ENCODE measurements at regions of chr17 and their contacts with region 1.

Region 1: DNA sequence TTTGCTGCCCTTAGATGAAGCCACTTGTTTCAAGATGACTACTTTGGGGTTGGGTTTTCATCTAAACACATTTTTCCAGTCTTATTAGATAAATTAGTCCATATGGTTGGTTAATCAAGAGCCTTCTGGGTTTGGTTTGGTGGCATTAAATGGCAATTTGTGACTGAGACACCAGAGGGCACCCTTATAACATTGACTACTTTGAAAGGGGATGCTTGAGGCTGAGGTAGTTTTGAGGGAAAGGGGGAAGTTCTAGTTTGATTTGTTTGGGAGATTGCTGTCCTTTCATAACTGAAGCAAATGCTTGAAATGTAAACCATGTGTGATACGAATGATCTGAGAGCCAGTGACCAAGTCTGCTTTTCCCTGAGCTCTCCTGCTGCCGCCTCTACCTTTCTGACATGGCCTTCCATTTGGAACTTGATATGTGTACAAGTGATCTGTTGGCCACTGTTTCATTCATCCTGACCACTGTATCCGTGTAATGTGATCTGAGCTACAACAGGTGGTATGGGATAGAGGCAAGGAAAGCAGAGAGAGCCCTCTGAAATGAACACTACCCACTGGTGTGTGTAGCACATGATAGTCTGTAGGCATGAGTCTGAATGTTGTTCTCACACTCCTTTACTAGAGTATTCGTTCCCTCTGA is 5.8 kb upstream of the RARA start:
- DNase-seq: no peak
- ATAC-seq: peak; percentile 83
- H3K4me3 ChIP-seq: no peak overlapping the region
- H3K27ac ChIP-seq: no peak overlapping the region
- H3K4me1 ChIP-seq: peaks cover 5% of the 10 kb centered on the region; the same call in 1 of the 2 replicates
- H3K27me3 ChIP-seq: no peaks in the 10 kb centered on the region
- CTCF ChIP-seq: peak; percentile 62 to 80 (median 68); a peak in 5 of 6 replicates
- EP300 ChIP-seq: no peak
- POLR2A ChIP-seq: no peak; the same call in 1 of the 2 replicates
- RAD21 ChIP-seq: peak; percentile 96

Region 2: DNA sequence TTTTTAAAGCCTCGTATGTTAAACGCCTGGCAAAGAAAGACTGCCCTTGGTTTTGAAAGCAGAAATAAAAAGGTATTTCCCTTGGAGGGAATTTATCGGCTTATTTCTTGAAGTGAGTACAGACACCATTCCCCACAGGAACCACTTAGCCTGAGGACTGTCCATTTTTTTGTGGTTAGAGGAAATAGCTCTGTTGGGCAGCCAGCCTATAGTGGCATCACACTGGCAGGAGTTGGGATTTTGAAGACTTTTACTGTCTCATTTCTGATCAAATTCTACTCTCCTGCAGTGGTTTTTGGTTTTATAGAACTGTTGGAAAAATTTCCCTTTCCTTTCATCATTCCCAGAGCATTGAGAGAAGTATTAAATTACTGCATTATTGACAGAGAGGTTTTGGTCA is 49.6 kb before region 1 on chr17:
- CTCF ChIA-PET with region 1: no interaction called
- POLR2A ChIA-PET with region 1: no interaction called
- RAD21 ChIA-PET with region 1: no interaction called
- SMC1A ChIA-PET with region 1: no interaction called
- in situ Hi-C with region 1: no loop called
- intact Hi-C with region 1: no loop called
- DNase-seq: no peak
- ATAC-seq: no peak
- H3K4me3 ChIP-seq: no peak overlapping the region
- H3K27ac ChIP-seq: no peak overlapping the region
- H3K4me1 ChIP-seq: no peaks in the 10 kb centered on the region
- H3K27me3 ChIP-seq: no peaks in the 10 kb centered on the region
- CTCF ChIP-seq: no peak
- EP300 ChIP-seq: no peak
- POLR2A ChIP-seq: no peak
- RAD21 ChIP-seq: no peak

Region 3: GRCh38 chr17:40317880-40318829 is 15.0 kb after region 1 on chr17:
- CTCF ChIA-PET with region 1: interaction called, 90 read pairs
- POLR2A ChIA-PET with region 1: interaction called, 123 read pairs
- RAD21 ChIA-PET with region 1: interaction called, 156 read pairs
- SMC1A ChIA-PET with region 1: interaction called, 172 read pairs
- in situ Hi-C with region 1: no loop called
- intact Hi-C with region 1: no loop called
- DNase-seq: peak; percentile 79
- ATAC-seq: peak; percentile 83
- H3K4me3 ChIP-seq: peak overlapping the region; percentile 91
- H3K27ac ChIP-seq: peak overlapping the region; percentile 96
- H3K4me1 ChIP-seq: peaks cover 44% of the 10 kb centered on the region
- H3K27me3 ChIP-seq: no peaks in the 10 kb centered on the region
- CTCF ChIP-seq: no peak
- EP300 ChIP-seq: no peak; a peak in 1 of 4 replicates
- POLR2A ChIP-seq: peak; percentile 79
- RAD21 ChIP-seq: no peak

Region 4: GRCh38 chr17:40340880-40341807 is 38.0 kb after region 1 on chr17:
- CTCF ChIA-PET with region 1: interaction called, 15 read pairs
- POLR2A ChIA-PET with region 1: interaction called, 4 read pairs
- RAD21 ChIA-PET with region 1: interaction called, 12 read pairs
- SMC1A ChIA-PET with region 1: interaction called, 6 read pairs
- in situ Hi-C with region 1: no loop called
- intact Hi-C with region 1: no loop called
- DNase-seq: no peak
- ATAC-seq: peak; percentile 95
- H3K4me3 ChIP-seq: peak overlapping the region; percentile 70
- H3K27ac ChIP-seq: no peak overlapping the region
- H3K4me1 ChIP-seq: peaks cover 54% of the 10 kb centered on the region
- H3K27me3 ChIP-seq: no peaks in the 10 kb centered on the region
- CTCF ChIP-seq: peak in 2 of 3 experiments; percentile 17 to 35; a peak in 4 of 6 replicates
- EP300 ChIP-seq: no peak
- POLR2A ChIP-seq: no peak
- RAD21 ChIP-seq: no peak

Region 5: DNA sequence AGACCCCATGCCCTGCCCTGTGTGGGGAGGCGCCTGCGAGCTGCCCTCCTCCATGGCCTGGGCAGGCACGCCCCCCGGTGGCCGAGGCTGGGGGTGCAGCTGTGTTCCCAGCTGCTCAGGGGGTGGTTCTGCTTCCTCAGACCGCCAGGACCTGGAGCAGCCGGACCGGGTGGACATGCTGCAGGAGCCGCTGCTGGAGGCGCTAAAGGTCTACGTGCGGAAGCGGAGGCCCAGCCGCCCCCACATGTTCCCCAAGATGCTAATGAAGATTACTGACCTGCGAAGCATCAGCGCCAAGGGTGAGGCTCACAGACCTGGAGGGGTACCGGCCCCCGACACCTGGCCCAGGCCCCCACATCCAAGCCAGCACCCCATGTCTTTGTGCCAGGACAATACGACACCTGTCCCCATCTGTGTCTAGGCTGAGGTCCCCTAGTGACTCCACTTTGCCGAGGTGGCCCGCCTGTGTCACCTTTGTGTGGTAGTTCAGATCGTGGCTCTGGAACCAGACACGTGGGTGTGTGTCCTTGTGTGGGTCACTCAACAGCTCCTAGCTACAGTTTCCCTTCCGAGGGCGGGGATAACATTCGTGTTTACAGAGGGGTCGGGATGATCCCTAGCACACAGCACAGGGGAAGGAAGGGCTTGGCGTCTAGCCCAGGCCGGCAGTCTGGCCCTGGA is 52.1 kb after region 1 on chr17:
- CTCF ChIA-PET with region 1: interaction called, 311 read pairs
- POLR2A ChIA-PET with region 1: interaction called, 9 read pairs
- RAD21 ChIA-PET with region 1: interaction called, 271 read pairs
- SMC1A ChIA-PET with region 1: interaction called, 142 read pairs
- in situ Hi-C with region 1: loop called (anchors 5 kb)
- intact Hi-C with region 1: loop called (anchors 1 kb)
- DNase-seq: no peak
- ATAC-seq: peak; percentile 89
- H3K4me3 ChIP-seq: no peak overlapping the region
- H3K27ac ChIP-seq: no peak overlapping the region
- H3K4me1 ChIP-seq: peaks cover 15% of the 10 kb centered on the region
- H3K27me3 ChIP-seq: peaks cover 0 to 2% of the 10 kb centered on the region in 2 experiments; a peak in 1 of 4 replicates
- CTCF ChIP-seq: peak; percentile 84 to 96 (median 96)
- EP300 ChIP-seq: no peak
- POLR2A ChIP-seq: peak; percentile 42
- RAD21 ChIP-seq: peak; percentile 96

Region 6: DNA sequence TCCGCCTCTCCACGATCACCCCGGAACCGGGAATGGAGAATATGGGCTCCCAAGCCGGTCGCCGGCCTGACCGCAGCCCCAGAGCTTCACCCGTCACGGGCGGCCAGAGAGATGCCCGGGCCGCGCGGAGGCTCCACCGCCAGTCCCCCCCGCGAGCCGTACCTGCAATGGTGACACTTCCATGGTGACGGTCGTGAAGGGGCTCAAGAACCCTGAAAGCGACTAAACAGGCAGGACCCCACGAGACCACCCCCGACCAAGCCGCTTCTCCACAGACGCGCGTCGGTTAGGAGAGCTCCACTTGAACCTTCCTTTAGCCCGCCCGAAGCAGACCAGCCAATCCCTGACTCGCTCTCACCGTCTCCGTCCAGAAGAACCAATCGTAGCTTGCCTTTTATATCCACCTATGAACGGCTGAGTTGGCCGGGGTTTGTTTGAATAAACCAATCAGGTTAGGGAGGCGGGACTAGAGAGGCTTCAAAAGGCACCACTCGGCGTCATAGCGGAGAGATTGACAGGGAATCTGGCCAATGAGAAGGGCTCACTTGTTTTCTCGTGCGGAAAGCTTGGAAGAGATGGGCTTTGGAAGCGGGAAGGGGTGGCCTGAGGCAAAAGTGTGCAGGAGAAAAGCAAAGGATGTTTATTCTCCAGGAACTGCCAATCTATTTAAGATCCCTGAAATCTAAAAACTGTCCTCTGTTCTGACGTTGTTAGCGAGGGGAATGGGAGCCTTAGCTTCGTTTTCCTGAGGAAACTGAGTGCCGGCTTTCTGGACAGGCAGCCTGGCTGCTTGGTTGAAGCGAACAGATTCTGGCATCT is 114.7 kb after region 1 on chr17 and contains the start of gene TOP2A:
- CTCF ChIA-PET with region 1: interaction called, 22 read pairs
- POLR2A ChIA-PET with region 1: no interaction called
- RAD21 ChIA-PET with region 1: interaction called, 16 read pairs
- SMC1A ChIA-PET with region 1: interaction called, 22 read pairs
- in situ Hi-C with region 1: no loop called
- intact Hi-C with region 1: no loop called
- DNase-seq: peak; percentile 99
- ATAC-seq: peak; percentile 97
- H3K4me3 ChIP-seq: peak within 1 kb of the TSS; percentile 94
- H3K27ac ChIP-seq: peak within 1 kb of the TSS; percentile 62
- H3K4me1 ChIP-seq: no peaks in the 10 kb centered on the region; the same call in 1 of the 2 replicates
- H3K27me3 ChIP-seq: no peaks in the 10 kb centered on the region; a peak in 1 of 4 replicates
- CTCF ChIP-seq: no peak
- EP300 ChIP-seq: no peak
- POLR2A ChIP-seq: peak; percentile 91
- RAD21 ChIP-seq: no peak
- polyA plus RNA-seq, gene TOP2A: 149 to 236 TPM

Measured in GM12878 (cell line).